ENCODE measurements at regions of chr19 and their contacts with region 1.

Region 1: DNA sequence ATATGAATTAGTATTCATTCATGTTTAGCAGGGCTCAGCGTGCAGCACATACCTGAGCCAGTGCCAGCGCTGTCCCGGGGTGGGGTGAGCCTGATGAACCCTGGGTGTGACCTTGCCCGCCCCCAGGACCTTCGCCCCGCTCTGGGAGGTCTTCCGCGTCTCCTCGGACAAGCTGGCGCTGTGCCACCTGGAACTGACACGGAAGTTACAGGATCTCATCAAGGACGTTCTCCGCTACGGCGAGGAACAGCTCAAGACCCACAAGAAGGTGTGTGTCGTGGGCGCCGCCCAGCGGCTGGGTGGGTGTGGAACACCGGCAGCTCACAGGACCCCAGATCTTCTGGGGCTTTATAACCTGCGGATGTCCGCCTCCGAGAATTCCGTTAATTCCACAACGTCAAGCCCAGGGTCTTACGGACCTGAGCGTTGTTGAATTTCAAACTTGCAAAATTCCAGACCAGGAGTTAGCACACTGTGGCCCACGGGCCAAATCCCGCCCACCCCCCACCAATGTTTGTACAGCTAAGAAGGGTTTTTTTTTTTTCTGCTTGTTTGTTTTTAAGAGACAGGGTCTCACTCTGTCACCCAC is 15.4 kb downstream of the FCHO1 start:
- DNase-seq: peak; percentile 73
- H3K4me3 ChIP-seq: no peak overlapping the region
- H3K27ac ChIP-seq: no peak overlapping the region
- H3K4me1 ChIP-seq: peaks cover 3% of the 10 kb centered on the region
- H3K27me3 ChIP-seq: no peaks in the 10 kb centered on the region
- CTCF ChIP-seq: peak; percentile 96 to 97
- POLR2A ChIP-seq: no peak

Region 2: DNA sequence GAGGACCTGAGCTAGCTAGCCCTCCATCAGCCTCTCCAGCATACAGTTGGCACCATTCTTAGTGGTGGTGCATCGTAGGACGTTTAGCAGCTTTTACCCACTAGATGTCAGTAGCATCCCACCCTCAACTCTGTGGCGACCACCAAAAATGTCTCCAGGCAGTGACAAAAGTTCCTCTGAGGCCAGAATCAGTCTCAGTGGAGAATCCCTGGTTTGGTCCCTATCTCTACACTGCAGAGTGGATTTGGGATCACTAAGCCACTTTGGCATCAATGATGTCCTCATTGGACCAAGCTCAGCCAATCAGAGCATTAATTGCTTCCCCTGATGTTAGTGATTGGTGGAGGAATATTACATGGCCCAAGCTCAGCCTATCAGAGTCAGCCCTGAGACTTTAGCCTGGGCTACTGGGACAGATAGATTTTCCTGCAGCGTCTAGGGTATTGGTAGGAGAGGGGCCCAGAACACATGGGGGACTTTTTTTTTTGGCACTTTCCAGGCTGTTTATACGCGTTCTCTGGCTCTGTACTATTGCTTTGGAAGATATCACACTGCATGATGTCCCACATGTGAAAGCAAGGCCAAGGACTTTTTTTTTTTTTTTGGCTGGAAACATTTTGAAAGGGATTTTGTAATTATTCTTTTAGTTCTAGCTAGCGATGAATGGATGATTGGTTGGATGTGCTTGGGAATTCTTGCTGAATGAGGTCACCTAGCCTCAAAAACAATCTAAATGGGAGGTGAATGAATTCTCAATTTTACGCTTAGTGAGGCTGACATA is 325.2 kb before region 1 on chr19:
- CTCF ChIA-PET with region 1: interaction called, 17 read pairs
- POLR2A ChIA-PET with region 1: no interaction called
- dilution Hi-C with region 1: no loop called
- intact Hi-C with region 1: no loop called
- DNase-seq: peak; percentile 28
- H3K4me3 ChIP-seq: no peak overlapping the region
- H3K27ac ChIP-seq: no peak overlapping the region
- H3K4me1 ChIP-seq: no peaks in the 10 kb centered on the region
- H3K27me3 ChIP-seq: peaks cover 2 to 3% of the 10 kb centered on the region in 2 experiments
- CTCF ChIP-seq: peak; percentile 37 to 57
- POLR2A ChIP-seq: no peak

Region 3: GRCh38 chr19:17539238-17540117 is 227.2 kb before region 1 on chr19:
- CTCF ChIA-PET with region 1: interaction called, 15 read pairs
- POLR2A ChIA-PET with region 1: no interaction called
- dilution Hi-C with region 1: no loop called
- intact Hi-C with region 1: no loop called
- DNase-seq: peak; percentile 93
- H3K4me3 ChIP-seq: peak overlapping the region in 2 of 3 experiments; percentile 6 to 38
- H3K27ac ChIP-seq: no peak overlapping the region
- H3K4me1 ChIP-seq: peaks cover 7% of the 10 kb centered on the region
- H3K27me3 ChIP-seq: no peaks in the 10 kb centered on the region
- CTCF ChIP-seq: peak in 1 of 2 donors; percentile 67
- POLR2A ChIP-seq: no peak

Region 4: GRCh38 chr19:17616961-17617806 is 149.5 kb before region 1 on chr19:
- CTCF ChIA-PET with region 1: interaction called, 15 read pairs
- POLR2A ChIA-PET with region 1: no interaction called
- dilution Hi-C with region 1: no loop called
- intact Hi-C with region 1: no loop called
- DNase-seq: no peak
- H3K4me3 ChIP-seq: no peak overlapping the region
- H3K27ac ChIP-seq: no peak overlapping the region
- H3K4me1 ChIP-seq: no peaks in the 10 kb centered on the region
- H3K27me3 ChIP-seq: peaks cover 2 to 3% of the 10 kb centered on the region in 2 experiments
- CTCF ChIP-seq: no peak
- POLR2A ChIP-seq: no peak

Region 5: GRCh38 chr19:17718947-17719711 is 47.5 kb before region 1 on chr19 and contains the start of gene MAP1S:
- CTCF ChIA-PET with region 1: interaction called, 26 read pairs
- POLR2A ChIA-PET with region 1: no interaction called
- dilution Hi-C with region 1: no loop called
- intact Hi-C with region 1: no loop called
- DNase-seq: peak; percentile 46
- H3K4me3 ChIP-seq: peak within 1 kb of the TSS; percentile 76 to 96 (median 90)
- H3K27ac ChIP-seq: peak within 1 kb of the TSS; percentile 90
- H3K4me1 ChIP-seq: peaks cover 35% of the 10 kb centered on the region
- H3K27me3 ChIP-seq: no peaks in the 10 kb centered on the region
- CTCF ChIP-seq: no peak
- POLR2A ChIP-seq: peak; percentile 92
- total RNA-seq, gene MAP1S: 143 and 166 TPM in 2 replicates

Region 6: GRCh38 chr19:17754634-17755442 is 11.8 kb before region 1 on chr19:
- CTCF ChIA-PET with region 1: interaction called, 21 read pairs
- POLR2A ChIA-PET with region 1: no interaction called
- dilution Hi-C with region 1: no loop called
- intact Hi-C with region 1: no loop called
- DNase-seq: no peak
- H3K4me3 ChIP-seq: no peak overlapping the region
- H3K27ac ChIP-seq: no peak overlapping the region
- H3K4me1 ChIP-seq: peaks cover 3% of the 10 kb centered on the region
- H3K27me3 ChIP-seq: no peaks in the 10 kb centered on the region
- CTCF ChIP-seq: no peak
- POLR2A ChIP-seq: no peak

Region 7: GRCh38 chr19:17836530-17836929 is 69.9 kb after region 1 on chr19:
- CTCF ChIA-PET with region 1: no interaction called
- POLR2A ChIA-PET with region 1: no interaction called
- dilution Hi-C with region 1: no loop called
- intact Hi-C with region 1: no loop called
- DNase-seq: no peak
- H3K4me3 ChIP-seq: no peak overlapping the region
- H3K27ac ChIP-seq: no peak overlapping the region
- H3K4me1 ChIP-seq: peaks cover 6% of the 10 kb centered on the region
- H3K27me3 ChIP-seq: no peaks in the 10 kb centered on the region
- CTCF ChIP-seq: no peak
- POLR2A ChIP-seq: no peak